Cardiac septum (tissue), 1 donor: ENCODE measurements at regions of chr10 and their contacts with region 1.

Region 1: DNA sequence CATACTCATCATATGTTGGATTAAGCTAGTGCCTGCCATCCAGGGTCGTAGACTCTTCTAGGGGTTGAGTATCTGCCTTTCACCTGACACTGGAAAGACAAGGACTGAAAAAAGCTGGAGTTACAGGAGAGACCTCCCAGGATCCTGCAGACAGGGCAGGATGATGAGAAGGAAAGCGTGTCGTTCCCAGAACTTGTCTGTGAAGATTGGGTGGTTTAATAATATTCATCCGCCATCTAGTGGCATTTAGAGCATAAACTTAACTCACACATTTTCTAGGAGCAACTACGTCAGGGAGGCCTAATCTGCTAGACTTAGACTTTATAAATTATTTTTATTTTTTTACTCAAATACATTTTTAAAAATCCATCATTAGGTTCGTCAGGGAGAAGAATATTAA is 59.6 kb downstream of the ADRB1 start:
- DNase-seq: no peak

Region 2: GRCh38 chr10:113704637-113705343 is 398.5 kb before region 1 on chr10:
- intact Hi-C with region 1: loop called (anchors 5 kb)
- DNase-seq: no peak

Region 3: DNA sequence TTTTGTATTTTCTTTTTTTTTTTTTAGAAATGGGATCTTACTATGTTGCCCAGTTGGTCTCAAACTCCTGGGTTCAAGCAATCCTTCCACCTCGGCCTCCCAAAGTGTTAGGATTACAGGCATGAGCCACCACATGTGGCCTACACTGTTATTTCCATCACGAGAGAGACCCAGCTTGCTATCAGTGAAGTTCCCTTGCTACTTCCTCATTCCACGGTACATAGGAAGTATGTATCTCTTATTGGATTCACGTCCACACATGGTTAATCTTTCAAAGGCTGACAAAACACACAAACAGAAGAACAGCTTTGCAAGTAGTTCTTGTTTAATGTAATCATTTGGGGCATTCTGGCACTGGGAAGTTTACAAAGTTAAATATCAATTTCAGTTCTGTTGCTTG is 300.3 kb before region 1 on chr10:
- intact Hi-C with region 1: loop called (anchors 2 kb)
- DNase-seq: no peak

Region 4: DNA sequence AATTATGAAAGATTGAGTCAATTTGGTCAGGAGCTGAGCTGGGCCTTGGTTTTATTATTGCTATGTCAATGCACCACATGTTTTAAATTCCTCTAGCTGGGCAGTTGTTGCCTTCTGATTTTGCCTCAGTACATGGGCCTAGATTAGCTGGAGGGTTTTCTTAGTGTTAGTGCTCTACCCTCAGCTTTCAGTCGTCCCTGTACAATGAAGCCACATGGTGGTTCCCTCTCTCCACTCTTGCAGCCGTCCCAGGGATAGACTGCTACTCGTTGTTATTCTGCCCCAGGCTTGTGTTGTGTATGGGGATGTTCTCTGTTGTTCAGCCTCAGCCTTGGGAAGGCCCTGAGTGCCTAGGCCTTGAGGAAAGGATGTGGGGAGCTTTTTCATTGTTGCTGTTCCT is 211.8 kb before region 1 on chr10:
- intact Hi-C with region 1: loop called (anchors 5 kb)
- DNase-seq: no peak